ENCODE measurements at regions of chr7 and their contacts with region 1.

Region 1: GRCh38 chr7:42931834-42932651 is at the starts of genes MRPL32 and PSMA2:
- DNase-seq: peak; percentile 99
- H3K4me3 ChIP-seq: peak within 1 kb of the TSS; percentile 54 to 95 (median 91)
- H3K27ac ChIP-seq: peak within 1 kb of the TSS; percentile 64
- H3K4me1 ChIP-seq: peaks cover 29% of the 10 kb centered on the region
- H3K27me3 ChIP-seq: no peaks in the 10 kb centered on the region
- CTCF ChIP-seq: no peak
- POLR2A ChIP-seq: peak; percentile 74
- total RNA-seq, gene MRPL32: 56.6 and 62.2 TPM in 2 replicates
- total RNA-seq, gene PSMA2: 110 and 118 TPM in 2 replicates

Region 2: DNA sequence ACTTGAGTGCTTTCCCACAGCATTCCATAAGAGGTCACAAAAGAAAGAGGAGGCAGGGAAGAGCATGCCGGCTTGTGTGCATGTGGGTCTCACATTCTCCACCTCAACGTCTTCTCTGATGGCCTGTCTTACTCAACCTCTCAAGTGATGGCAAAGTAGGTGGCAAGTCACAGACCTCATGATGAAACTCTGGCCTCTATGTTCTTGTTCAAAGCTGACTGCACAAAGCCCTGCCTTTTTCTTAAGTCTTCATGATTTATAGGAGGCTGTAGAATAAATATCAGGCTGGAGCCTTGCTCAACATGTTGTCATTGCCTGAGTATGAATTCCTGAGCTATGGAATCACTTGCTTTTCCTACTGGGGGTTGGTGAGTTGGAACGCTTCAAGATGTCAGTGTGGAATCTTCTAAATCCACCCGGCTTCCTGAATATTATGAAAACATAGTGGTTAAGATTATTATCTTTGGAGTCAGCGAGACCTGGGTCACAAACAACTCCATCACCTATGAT is 1015.5 kb before region 1 on chr7:
- CTCF ChIA-PET with region 1: no interaction called
- POLR2A ChIA-PET with region 1: no interaction called
- dilution Hi-C with region 1: no loop called
- intact Hi-C with region 1: no loop called
- DNase-seq: peak; percentile 86
- H3K4me3 ChIP-seq: peak overlapping the region in 1 of 3 experiments; percentile 4
- H3K27ac ChIP-seq: peak overlapping the region; percentile 84
- H3K4me1 ChIP-seq: peaks cover 24% of the 10 kb centered on the region
- H3K27me3 ChIP-seq: no peaks in the 10 kb centered on the region
- CTCF ChIP-seq: no peak
- POLR2A ChIP-seq: peak; percentile 31

Region 3: GRCh38 chr7:42395607-42396006 is 536.4 kb before region 1 on chr7:
- CTCF ChIA-PET with region 1: no interaction called
- POLR2A ChIA-PET with region 1: no interaction called
- dilution Hi-C with region 1: no loop called
- intact Hi-C with region 1: no loop called
- DNase-seq: no peak
- H3K4me3 ChIP-seq: no peak overlapping the region
- H3K27ac ChIP-seq: no peak overlapping the region
- H3K4me1 ChIP-seq: no peaks in the 10 kb centered on the region
- H3K27me3 ChIP-seq: peaks cover 6 to 13% of the 10 kb centered on the region in 2 experiments
- CTCF ChIP-seq: no peak
- POLR2A ChIP-seq: no peak

Region 4: DNA sequence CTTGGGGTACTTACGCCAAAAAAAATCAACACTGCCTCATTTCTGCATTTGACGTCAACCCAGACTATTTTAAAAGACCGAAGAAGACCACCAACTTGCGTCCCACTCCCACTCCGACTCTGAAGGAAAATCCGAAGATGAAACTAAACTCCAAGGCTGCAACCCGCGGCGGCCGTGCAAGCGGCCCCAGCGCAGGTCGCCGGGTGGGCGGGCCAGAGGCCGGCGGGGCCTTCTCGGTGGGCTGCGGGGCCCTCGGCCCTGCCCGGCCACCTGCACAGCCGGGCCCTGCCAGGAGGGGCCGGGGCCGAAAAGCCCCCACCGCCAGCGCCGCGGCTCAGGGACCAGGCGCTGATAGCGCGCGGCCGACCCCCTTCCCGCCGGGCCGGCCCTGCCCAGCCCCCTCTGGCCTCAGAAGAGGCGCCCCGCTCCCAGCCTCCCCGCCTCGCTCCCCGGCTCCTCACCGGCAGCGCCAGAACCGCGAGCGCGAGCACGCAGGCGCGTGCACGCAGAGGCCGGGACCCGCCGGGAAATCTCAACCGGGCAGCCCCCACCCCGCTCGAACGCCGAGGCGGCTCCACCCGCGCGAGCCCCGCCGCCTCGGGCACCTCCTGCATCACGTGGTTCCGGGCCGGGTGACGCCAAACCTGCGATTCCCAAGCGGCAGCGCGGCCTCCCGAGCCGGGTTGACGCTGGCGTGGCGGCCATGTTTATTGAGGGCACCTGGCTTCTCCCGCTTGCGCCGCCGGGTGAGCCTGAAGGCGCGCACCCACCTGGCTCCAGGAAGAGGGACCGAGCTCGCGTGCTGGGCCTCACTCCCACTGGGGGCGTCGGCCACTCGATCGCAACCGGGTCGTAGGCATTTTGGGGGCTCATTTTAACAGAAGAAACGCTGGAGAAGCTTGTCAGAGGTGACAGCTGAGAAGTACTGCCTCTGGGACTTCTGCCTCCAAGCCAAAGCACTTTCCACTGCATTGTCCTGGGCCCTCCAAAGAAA is 20.3 kb before region 1 on chr7 and contains the start of gene C7orf25:
- CTCF ChIA-PET with region 1: interaction called, 9 read pairs
- POLR2A ChIA-PET with region 1: no interaction called
- dilution Hi-C with region 1: no loop called
- intact Hi-C with region 1: loop called (anchors 1 kb)
- DNase-seq: peak; percentile 95
- H3K4me3 ChIP-seq: peak within 1 kb of the TSS; percentile 68 to 94 (median 92)
- H3K27ac ChIP-seq: peak within 1 kb of the TSS; percentile 33
- H3K4me1 ChIP-seq: peaks cover 33% of the 10 kb centered on the region
- H3K27me3 ChIP-seq: no peaks in the 10 kb centered on the region
- CTCF ChIP-seq: no peak
- POLR2A ChIP-seq: peak; percentile 60
- total RNA-seq, gene C7orf25: 4.2 and 4.5 TPM in 2 replicates

Region 5: DNA sequence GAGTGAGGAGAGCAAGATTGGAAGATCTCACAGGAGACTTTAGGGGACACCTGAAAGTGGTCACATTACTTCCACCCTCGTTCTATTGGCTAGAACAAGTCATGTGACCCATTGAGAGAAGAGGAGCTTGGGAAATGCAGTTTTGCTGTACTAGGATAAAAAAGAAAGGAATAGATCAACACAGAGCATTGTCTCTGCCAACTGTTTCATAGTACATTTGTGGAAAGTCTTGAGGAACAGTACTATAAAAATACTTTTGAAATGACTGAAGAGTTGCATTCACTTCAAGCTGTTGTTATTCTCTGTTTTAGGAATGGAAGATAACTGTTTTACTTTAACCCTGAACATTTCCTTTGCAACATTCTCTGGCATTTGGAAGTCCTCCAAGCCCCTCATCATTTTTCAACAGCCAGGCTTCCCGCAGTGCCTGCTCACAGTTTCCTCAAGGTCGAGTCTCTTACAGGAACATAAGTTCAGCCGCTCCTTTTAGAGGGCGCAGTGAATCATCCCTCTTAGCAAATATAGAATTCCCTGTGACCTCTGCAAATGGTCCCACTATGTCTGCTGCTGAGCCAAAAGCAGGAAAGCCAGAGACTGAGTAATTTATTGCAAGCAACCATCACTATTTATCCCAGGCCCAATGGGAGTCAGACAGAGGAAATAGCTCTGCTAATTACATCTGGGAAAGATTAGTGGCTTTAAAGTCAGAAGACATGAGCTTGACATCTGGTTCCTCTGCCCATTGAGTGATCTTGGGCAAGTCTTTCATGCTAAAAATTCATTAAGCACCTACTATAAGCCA is 40.9 kb after region 1 on chr7:
- CTCF ChIA-PET with region 1: no interaction called
- POLR2A ChIA-PET with region 1: interaction called, 3 read pairs
- dilution Hi-C with region 1: no loop called
- intact Hi-C with region 1: loop called (anchors 2 kb)
- DNase-seq: peak; percentile 92
- H3K4me3 ChIP-seq: peak overlapping the region in 1 of 3 experiments; percentile 2
- H3K27ac ChIP-seq: peak overlapping the region; percentile 3
- H3K4me1 ChIP-seq: peaks cover 18% of the 10 kb centered on the region
- H3K27me3 ChIP-seq: no peaks in the 10 kb centered on the region
- CTCF ChIP-seq: no peak
- POLR2A ChIP-seq: no peak

Region 6: DNA sequence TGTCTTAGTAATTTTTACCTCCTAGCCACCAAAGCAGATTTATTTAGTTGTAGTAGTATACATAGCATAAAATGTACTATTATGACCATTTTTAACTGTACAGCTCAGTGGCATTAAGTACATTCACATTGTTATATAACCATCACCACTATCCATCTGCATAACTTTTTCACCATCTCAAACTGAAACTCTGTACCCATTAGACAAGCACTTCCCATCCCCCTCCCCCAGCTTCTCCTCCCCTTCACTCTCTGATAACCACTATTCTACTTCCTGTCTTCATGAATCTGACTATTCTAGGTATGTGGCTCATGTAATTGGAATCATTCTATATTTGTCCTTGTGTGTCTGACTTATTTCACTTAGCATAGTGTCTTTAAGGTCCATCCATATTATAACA is 72.0 kb after region 1 on chr7:
- CTCF ChIA-PET with region 1: no interaction called
- POLR2A ChIA-PET with region 1: no interaction called
- dilution Hi-C with region 1: no loop called
- intact Hi-C with region 1: no loop called
- DNase-seq: no peak
- H3K4me3 ChIP-seq: no peak overlapping the region
- H3K27ac ChIP-seq: no peak overlapping the region
- H3K4me1 ChIP-seq: no peaks in the 10 kb centered on the region
- H3K27me3 ChIP-seq: peaks cover 1 to 5% of the 10 kb centered on the region in 2 experiments
- CTCF ChIP-seq: no peak
- POLR2A ChIP-seq: no peak